CD8-positive, alpha-beta memory T cell (primary cell): ENCODE measurements at regions of chr11 and their contacts with region 1.

Region 1: GRCh38 chr11:57800444-57801182 is 39.0 kb downstream of the CTNND1 start:
- DNase-seq: peak in 2 of 5 donors; percentile 57 to 65
- H3K4me3 ChIP-seq: no peak overlapping the region
- H3K4me3 Mint-ChIP-seq: peak overlapping the region in 2 of 7 donors; percentile 15 to 41
- H3K27ac ChIP-seq: no peak overlapping the region
- H3K27ac Mint-ChIP-seq: peak overlapping the region; percentile 30 to 92 (median 86)
- H3K4me1 ChIP-seq: peaks cover 22% of the 10 kb centered on the region
- H3K4me1 Mint-ChIP-seq: peaks cover 11 to 21% (median 13%) of the 10 kb centered on the region in 3 donors
- H3K27me3 ChIP-seq: no peaks in the 10 kb centered on the region
- H3K27me3 Mint-ChIP-seq: peaks cover 0 to 2% of the 10 kb centered on the region in 2 donors

Region 2: DNA sequence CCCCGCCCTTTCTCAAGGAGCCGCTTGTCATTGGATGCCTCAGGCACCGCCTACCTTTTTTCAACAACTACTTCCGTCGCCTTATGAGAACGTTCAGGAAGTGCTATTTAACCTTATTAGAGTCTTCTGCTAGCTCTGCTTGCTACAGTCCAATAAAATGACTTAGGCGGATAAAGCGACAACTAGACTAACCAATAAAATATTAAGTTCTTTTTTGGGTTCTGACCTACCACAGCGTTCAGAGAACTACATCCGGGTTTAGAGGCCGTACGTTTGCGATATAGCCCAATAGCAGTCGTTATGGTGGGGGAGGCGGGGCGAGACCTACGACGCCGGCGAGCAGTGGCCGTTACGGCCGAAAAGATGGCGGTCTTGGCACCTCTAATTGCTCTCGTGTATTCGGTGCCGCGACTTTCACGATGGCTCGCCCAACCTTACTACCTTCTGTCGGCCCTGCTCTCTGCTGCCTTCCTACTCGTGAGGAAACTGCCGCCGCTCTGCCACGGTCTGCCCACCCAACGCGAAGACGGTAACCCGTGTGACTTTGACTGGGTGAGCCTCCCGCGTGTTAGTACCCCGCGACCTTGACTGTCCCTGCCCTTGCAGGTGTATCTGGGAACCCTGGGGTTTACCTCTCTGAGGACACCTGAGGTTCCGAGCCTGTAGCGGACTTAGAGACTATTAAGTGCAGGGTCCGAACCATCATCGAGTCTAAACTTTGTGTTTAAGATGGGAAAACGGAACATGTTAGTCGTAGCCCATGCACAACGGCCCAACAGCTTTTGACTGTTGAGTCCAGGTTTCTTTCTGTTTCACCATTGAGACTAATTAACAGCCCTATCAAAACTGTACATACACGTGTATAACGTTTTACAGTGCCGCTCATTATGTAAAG is 88.1 kb before region 1 on chr11 and contains the start of gene TMX2:
- CTCF ChIA-PET with region 1: interaction called, 10 read pairs
- POLR2A ChIA-PET with region 1: interaction called, 3 read pairs
- DNase-seq: peak; percentile 87 to 93 (median 90)
- H3K4me3 ChIP-seq: peak within 1 kb of the TSS; percentile 99
- H3K4me3 Mint-ChIP-seq: peak within 1 kb of the TSS; percentile 93 to 99 (median 98)
- H3K27ac ChIP-seq: peak within 1 kb of the TSS; percentile 90
- H3K27ac Mint-ChIP-seq: peak within 1 kb of the TSS; percentile 81 to 98 (median 98)
- H3K4me1 ChIP-seq: peaks cover 43% of the 10 kb centered on the region
- H3K4me1 Mint-ChIP-seq: peaks cover 42 to 57% (median 53%) of the 10 kb centered on the region in 3 donors
- H3K27me3 ChIP-seq: no peaks in the 10 kb centered on the region
- H3K27me3 Mint-ChIP-seq: no peaks in the 10 kb centered on the region
- total RNA-seq, gene TMX2: 129 to 131 TPM